BJ (cell line): ENCODE measurements at regions of chr20 and their contacts with region 1.

Region 1: DNA sequence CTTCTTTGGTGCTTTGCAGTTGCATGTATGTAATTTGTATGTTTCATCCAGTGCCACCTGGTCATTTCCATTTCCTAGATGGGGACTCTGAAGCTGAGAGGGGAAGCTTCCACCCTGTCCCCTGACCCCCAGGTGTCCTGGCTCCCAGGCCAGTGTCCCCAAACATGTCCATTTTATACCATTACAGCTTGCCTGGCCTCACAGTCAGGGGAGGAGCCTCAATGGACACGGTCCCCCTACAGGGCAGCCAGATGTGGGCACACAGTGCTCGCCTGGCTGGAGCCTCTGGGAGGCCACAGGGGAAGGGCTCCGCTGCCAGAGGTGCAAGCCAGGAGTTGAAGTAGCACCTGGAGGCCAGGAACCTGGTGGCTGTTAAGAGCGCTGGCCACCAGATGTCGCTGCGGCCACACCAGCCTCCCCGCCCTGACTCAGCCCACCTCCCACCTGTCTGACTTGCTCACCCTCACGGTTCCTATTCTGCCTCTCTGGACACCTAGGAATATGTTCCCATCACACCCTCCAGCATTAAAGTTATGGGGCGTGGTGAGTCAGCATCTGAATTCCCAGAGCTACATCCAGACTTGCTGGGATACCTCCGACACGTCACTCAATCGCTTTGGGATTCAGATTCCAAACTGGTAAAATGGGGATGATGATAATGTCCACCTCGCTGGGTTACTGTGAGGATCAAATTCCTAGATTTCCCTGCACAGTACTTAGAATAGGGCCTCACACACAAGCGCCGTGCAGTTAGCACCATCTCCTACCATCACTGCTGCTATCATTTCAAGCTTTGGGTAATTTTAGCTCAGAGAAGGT is 107.4 kb downstream of the SULF2 start:
- DNase-seq: no peak
- H3K4me3 ChIP-seq: no peak overlapping the region
- H3K27me3 ChIP-seq: no peaks in the 10 kb centered on the region
- CTCF ChIP-seq: peak; percentile 85

Region 2: GRCh38 chr20:47125583-47126373 is 552.1 kb before region 1 on chr20:
- CTCF ChIA-PET with region 1: no interaction called
- POLR2A ChIA-PET with region 1: no interaction called
- DNase-seq: no peak
- H3K4me3 ChIP-seq: no peak overlapping the region
- H3K27me3 ChIP-seq: no peaks in the 10 kb centered on the region
- CTCF ChIP-seq: no peak

Region 3: GRCh38 chr20:47663333-47664067 is 14.3 kb before region 1 on chr20:
- CTCF ChIA-PET with region 1: interaction called, 34 read pairs
- POLR2A ChIA-PET with region 1: no interaction called
- DNase-seq: no peak
- H3K4me3 ChIP-seq: no peak overlapping the region
- H3K27me3 ChIP-seq: no peaks in the 10 kb centered on the region
- CTCF ChIP-seq: peak; percentile 96

Region 4: GRCh38 chr20:47691625-47692024 is 13.8 kb after region 1 on chr20:
- CTCF ChIA-PET with region 1: interaction called, 14 read pairs
- POLR2A ChIA-PET with region 1: no interaction called
- DNase-seq: no peak
- H3K4me3 ChIP-seq: no peak overlapping the region
- H3K27me3 ChIP-seq: no peaks in the 10 kb centered on the region; the same call in 1 of the 2 replicates
- CTCF ChIP-seq: no peak

Region 5: GRCh38 chr20:47725248-47725973 is 47.6 kb after region 1 on chr20:
- CTCF ChIA-PET with region 1: interaction called, 14 read pairs
- POLR2A ChIA-PET with region 1: no interaction called
- DNase-seq: peak; percentile 41
- H3K4me3 ChIP-seq: no peak overlapping the region
- H3K27me3 ChIP-seq: no peaks in the 10 kb centered on the region
- CTCF ChIP-seq: peak; percentile 91

Region 6: GRCh38 chr20:47785854-47786764 is 108.3 kb after region 1 on chr20:
- CTCF ChIA-PET with region 1: interaction called, 20 read pairs
- POLR2A ChIA-PET with region 1: no interaction called
- DNase-seq: no peak
- H3K4me3 ChIP-seq: peak overlapping the region; percentile 59
- H3K27me3 ChIP-seq: peaks cover 10% of the 10 kb centered on the region
- CTCF ChIP-seq: peak; percentile 80

Region 7: GRCh38 chr20:47905612-47906347 is 227.9 kb after region 1 on chr20:
- CTCF ChIA-PET with region 1: no interaction called
- POLR2A ChIA-PET with region 1: no interaction called
- DNase-seq: no peak
- H3K4me3 ChIP-seq: no peak overlapping the region
- H3K27me3 ChIP-seq: peaks cover 5% of the 10 kb centered on the region; the same call in 1 of the 2 replicates
- CTCF ChIP-seq: no peak

Region 8: DNA sequence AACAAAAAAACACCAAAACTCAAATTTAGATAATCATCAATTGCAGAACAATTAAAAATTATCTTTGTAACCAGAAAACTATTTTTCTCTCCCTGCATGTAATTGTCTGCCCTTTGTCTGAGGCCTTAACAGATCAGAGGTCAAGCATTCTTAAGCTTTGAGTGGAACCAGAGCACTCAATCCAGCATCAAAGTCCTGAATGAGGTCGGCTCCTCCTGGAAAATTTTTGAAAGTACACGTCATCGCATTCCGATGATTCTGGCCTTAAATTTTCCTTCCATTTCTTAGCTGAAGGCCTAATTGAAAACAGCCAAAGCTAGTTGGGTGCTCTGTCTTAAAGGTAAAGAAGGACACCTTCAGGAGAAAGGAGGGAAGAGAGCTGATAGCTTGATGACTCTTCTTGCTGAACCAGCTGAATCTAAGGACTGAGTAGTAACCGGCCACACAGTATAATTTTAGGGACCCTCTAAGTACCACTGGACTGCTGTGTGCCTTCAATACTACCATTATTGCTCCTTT is 617.7 kb after region 1 on chr20:
- CTCF ChIA-PET with region 1: interaction called, 17 read pairs
- POLR2A ChIA-PET with region 1: no interaction called
- DNase-seq: peak; percentile 90
- H3K4me3 ChIP-seq: no peak overlapping the region
- H3K27me3 ChIP-seq: no peaks in the 10 kb centered on the region
- CTCF ChIP-seq: peak; percentile 50